ENCODE measurements at regions of chr5 and their contacts with region 1.

Region 1: GRCh38 chr5:79255786-79256557 is 20.0 kb downstream of the JMY start:
- DNase-seq: no peak
- H3K4me3 ChIP-seq: no peak overlapping the region
- H3K27ac ChIP-seq: no peak overlapping the region
- H3K27me3 ChIP-seq: no peaks in the 10 kb centered on the region
- CTCF ChIP-seq: peak; percentile 78

Region 2: GRCh38 chr5:79269733-79270166 is 13.8 kb after region 1 on chr5:
- CTCF ChIA-PET with region 1: interaction called, 12 read pairs
- POLR2A ChIA-PET with region 1: no interaction called
- DNase-seq: no peak
- H3K4me3 ChIP-seq: no peak overlapping the region
- H3K27ac ChIP-seq: no peak overlapping the region
- H3K27me3 ChIP-seq: no peaks in the 10 kb centered on the region
- CTCF ChIP-seq: no peak

Region 3: GRCh38 chr5:79357398-79357797 is 101.4 kb after region 1 on chr5:
- CTCF ChIA-PET with region 1: interaction called, 12 read pairs
- POLR2A ChIA-PET with region 1: no interaction called
- DNase-seq: no peak
- H3K4me3 ChIP-seq: no peak overlapping the region
- H3K27ac ChIP-seq: no peak overlapping the region
- H3K27me3 ChIP-seq: no peaks in the 10 kb centered on the region
- CTCF ChIP-seq: no peak

Region 4: GRCh38 chr5:79464695-79465332 is 208.8 kb after region 1 on chr5:
- CTCF ChIA-PET with region 1: interaction called, 40 read pairs
- POLR2A ChIA-PET with region 1: no interaction called
- DNase-seq: no peak
- H3K4me3 ChIP-seq: no peak overlapping the region
- H3K27ac ChIP-seq: no peak overlapping the region
- H3K27me3 ChIP-seq: no peaks in the 10 kb centered on the region
- CTCF ChIP-seq: peak; percentile 67